H1 (cell line): ENCODE measurements at regions of chr4 and their contacts with region 1.

Region 1: GRCh38 chr4:38114386-38115150 is 154.4 kb downstream of the PTTG2 start:
- DNase-seq: peak in 1 of 2 experiments; percentile 25
- H3K4me3 ChIP-seq: no peak overlapping the region
- H3K27ac ChIP-seq: no peak overlapping the region
- H3K4me1 ChIP-seq: peaks cover 6 to 26% (median 15%) of the 10 kb centered on the region in 4 experiments; a peak in 5 of 7 replicates
- H3K27me3 ChIP-seq: no peaks in the 10 kb centered on the region
- CTCF ChIP-seq: no peak
- EP300 ChIP-seq: no peak
- POLR2A ChIP-seq: no peak
- RAD21 ChIP-seq: no peak

Region 2: DNA sequence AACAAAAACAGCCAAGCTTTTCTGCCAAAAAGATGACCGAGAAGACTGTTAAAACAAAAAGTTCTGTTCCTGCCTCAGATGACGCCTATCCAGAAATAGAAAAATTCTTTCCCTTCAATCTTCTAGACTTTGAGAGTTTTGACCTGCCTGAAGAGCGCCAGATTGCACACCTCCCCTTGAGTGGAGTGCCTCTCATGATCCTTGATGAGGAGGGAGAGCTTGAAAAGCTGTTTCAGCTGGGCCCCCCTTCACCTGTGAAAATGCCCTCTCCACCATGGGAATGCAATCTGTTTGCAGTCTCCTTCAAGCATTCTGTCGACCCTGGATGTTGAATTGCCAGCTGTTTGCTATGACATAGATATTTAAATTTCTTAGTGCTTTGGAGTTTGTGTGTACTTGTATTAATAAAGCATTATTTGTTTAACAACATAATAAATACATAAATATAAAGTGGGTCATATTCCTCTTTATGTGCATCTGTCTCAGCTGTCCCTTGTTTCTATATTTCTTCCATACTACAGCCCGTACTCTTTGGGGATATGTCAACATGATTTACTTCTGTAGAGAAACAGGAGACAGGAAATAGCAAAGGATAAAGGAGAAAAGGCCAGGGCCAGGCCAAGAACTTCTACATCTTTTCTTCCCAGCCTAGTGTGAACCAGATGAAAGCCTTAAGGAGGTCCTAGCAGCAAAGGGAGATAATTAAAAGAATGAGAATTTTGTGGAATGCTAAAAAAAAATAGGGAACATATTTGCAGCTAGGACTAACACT is 153.7 kb before region 1 on chr4:
- CTCF ChIA-PET with region 1: no interaction called
- POLR2A ChIA-PET with region 1: no interaction called
- DNase-seq: no peak
- H3K4me3 ChIP-seq: no peak overlapping the region
- H3K27ac ChIP-seq: no peak overlapping the region
- H3K4me1 ChIP-seq: no peaks in the 10 kb centered on the region
- H3K27me3 ChIP-seq: no peaks in the 10 kb centered on the region
- CTCF ChIP-seq: no peak
- EP300 ChIP-seq: no peak
- POLR2A ChIP-seq: no peak
- RAD21 ChIP-seq: no peak

Region 3: DNA sequence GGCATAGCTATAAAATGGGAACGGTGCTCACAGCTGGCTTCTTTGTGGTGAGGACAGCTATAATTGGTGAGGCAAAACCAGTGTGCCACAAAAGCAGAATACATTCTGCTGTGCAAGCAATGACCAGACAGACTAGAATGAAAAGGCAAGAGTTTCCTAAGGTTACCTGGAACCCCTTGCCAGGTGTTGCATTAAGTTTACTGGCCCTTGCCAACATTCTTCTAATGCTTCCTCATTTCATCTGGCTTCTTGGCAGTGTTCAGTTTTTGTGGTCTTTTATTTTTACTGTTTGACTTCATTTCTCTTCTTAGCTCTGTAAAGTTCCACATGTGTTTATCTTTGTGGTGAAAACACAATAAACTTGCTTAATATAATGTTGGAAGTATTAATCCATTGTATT is 22.9 kb before region 1 on chr4:
- CTCF ChIA-PET with region 1: interaction called, 14 read pairs
- POLR2A ChIA-PET with region 1: interaction called, 3 read pairs
- DNase-seq: no peak
- H3K4me3 ChIP-seq: no peak overlapping the region
- H3K27ac ChIP-seq: no peak overlapping the region
- H3K4me1 ChIP-seq: peaks cover 0 to 14% (median 6%) of the 10 kb centered on the region in 4 experiments; a peak in 6 of 7 replicates
- H3K27me3 ChIP-seq: no peaks in the 10 kb centered on the region
- CTCF ChIP-seq: no peak
- EP300 ChIP-seq: no peak
- POLR2A ChIP-seq: no peak
- RAD21 ChIP-seq: no peak

Region 4: GRCh38 chr4:38144031-38144430 is 29.5 kb after region 1 on chr4:
- CTCF ChIA-PET with region 1: no interaction called
- POLR2A ChIA-PET with region 1: no interaction called
- DNase-seq: no peak
- H3K4me3 ChIP-seq: no peak overlapping the region
- H3K27ac ChIP-seq: no peak overlapping the region
- H3K4me1 ChIP-seq: no peaks in the 10 kb centered on the region
- H3K27me3 ChIP-seq: no peaks in the 10 kb centered on the region
- CTCF ChIP-seq: no peak
- EP300 ChIP-seq: no peak
- POLR2A ChIP-seq: no peak
- RAD21 ChIP-seq: no peak

Region 5: GRCh38 chr4:38562751-38563198 is 448.2 kb after region 1 on chr4:
- CTCF ChIA-PET with region 1: no interaction called
- POLR2A ChIA-PET with region 1: no interaction called
- DNase-seq: no peak
- H3K4me3 ChIP-seq: no peak overlapping the region
- H3K27ac ChIP-seq: no peak overlapping the region
- H3K4me1 ChIP-seq: peaks cover 0 to 4% (median 0%) of the 10 kb centered on the region in 4 experiments; a peak in 1 of 7 replicates
- H3K27me3 ChIP-seq: no peaks in the 10 kb centered on the region
- CTCF ChIP-seq: no peak
- EP300 ChIP-seq: no peak
- POLR2A ChIP-seq: no peak
- RAD21 ChIP-seq: no peak